ENCODE measurements at regions of chr6 and their contacts with region 1.

Region 1: GRCh38 chr6:79949233-79949632 is 1.9 kb upstream of the ELOVL4 start:
- DNase-seq: peak; percentile 79 to 88
- H3K4me3 ChIP-seq: no peak overlapping the region
- H3K27ac ChIP-seq: no peak overlapping the region
- H3K4me1 ChIP-seq: peaks cover 18 to 24% (median 22%) of the 10 kb centered on the region in 4 donors
- H3K27me3 ChIP-seq: peaks cover 0 to 38% (median 19%) of the 10 kb centered on the region in 3 donors
- CTCF ChIP-seq: peak in 5 of 7 experiments; percentile 27 to 65 (median 49)
- EP300 ChIP-seq: no peak
- POLR2A ChIP-seq: no peak

Region 2: DNA sequence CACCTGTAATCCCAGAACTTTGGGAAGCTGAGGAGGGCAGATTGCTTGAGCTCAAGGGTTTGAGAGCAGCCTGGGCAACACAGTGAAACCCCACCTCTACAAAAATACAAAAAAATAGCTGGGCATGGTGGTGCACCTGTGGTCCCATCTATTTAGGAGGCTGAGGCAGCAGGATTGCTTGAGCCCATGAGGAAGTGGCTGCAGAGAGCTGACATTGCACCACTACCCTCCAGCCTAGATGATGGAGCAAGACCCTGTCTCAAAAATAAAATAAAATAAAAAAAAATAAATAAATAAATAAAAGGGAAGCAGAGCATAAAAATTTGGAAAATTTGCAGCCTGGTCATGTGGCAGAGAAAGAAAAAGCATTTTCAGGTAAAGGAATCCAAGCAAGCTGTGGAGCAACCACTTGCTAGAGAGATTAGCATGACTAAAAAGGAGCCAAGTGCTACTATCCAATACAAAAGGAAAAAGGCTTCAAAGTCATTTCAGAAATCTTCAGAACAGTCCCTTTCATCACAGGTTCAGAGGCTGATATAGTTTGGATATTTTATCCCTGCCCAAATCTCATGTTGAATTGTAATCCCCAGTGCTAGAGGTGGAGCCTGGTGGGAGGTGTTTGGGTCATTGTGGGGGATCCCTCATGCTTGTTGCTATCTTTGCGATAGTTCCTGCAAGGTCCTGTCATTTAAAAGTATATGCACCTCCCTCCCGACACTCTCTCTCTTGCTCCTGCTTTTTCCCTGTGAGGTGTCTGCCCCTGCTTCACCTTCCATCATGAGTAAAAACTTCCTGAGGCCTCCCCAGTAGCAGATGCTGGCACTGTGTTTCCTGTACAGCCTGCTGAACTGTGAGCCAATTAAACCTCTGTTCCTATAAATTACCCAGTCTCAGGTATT is 44.0 kb after region 1 on chr6:
- intact Hi-C with region 1: no loop called
- DNase-seq: no peak
- H3K4me3 ChIP-seq: no peak overlapping the region
- H3K27ac ChIP-seq: no peak overlapping the region
- H3K4me1 ChIP-seq: no peaks in the 10 kb centered on the region
- H3K27me3 ChIP-seq: no peaks in the 10 kb centered on the region
- CTCF ChIP-seq: no peak
- EP300 ChIP-seq: no peak
- POLR2A ChIP-seq: no peak

Region 3: GRCh38 chr6:80029470-80029869 is 80.2 kb after region 1 on chr6:
- intact Hi-C with region 1: no loop called
- DNase-seq: no peak
- H3K4me3 ChIP-seq: no peak overlapping the region
- H3K27ac ChIP-seq: no peak overlapping the region
- H3K4me1 ChIP-seq: no peaks in the 10 kb centered on the region
- H3K27me3 ChIP-seq: no peaks in the 10 kb centered on the region
- CTCF ChIP-seq: no peak
- EP300 ChIP-seq: no peak
- POLR2A ChIP-seq: no peak

Region 4: DNA sequence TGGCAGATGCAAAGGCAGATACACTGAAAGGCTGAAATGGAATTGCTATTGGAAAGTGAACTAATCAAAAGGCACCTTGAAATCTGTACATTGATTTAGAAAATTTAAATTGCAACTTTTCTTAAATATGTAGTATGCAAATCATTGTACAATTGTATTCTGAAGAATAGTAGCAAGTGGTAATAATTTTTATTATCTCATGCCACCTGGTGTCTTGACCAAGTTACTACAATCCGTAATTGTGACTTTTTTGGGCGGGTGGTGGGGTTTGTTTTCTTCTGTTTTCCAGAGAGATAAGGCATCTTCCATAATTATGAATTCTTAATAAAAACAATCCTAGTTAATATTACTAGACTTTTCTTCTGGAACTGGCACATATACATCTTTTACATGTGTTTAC is 144.8 kb after region 1 on chr6:
- intact Hi-C with region 1: loop called (anchors 5 kb)
- DNase-seq: peak in 1 of 2 donors; percentile 27
- H3K4me3 ChIP-seq: no peak overlapping the region
- H3K27ac ChIP-seq: no peak overlapping the region
- H3K4me1 ChIP-seq: no peaks in the 10 kb centered on the region
- H3K27me3 ChIP-seq: no peaks in the 10 kb centered on the region
- CTCF ChIP-seq: peak in 4 of 7 experiments; percentile 45 to 69 (median 55)
- EP300 ChIP-seq: no peak
- POLR2A ChIP-seq: no peak

Measured in stomach (tissue), 19 donors.